Breast epithelium (tissue), 4 donors: ENCODE measurements at regions of chr11 and their contacts with region 1.

Region 1: DNA sequence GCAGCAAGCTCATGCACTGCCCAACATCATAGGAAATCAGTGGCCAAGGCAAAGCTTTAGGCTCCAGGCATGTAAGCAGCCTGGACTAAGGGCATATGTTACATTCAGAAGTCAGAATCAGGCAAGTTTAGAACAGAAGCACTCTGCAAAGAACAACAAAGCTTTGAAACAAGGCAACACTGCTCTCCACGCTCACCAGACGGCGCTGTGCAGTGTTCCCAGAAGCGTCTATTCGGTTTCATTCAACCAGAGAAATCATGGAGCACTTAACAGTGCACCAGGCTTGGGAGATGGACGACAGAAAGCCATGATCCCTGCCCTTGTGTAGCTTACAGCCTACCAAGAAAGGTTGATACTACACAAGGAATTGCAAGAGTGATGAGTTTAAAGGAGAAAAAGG is 555.8 kb downstream of the BUD13 start:
- DNase-seq: no peak
- H3K4me3 ChIP-seq: no peak overlapping the region
- H3K27ac ChIP-seq: no peak overlapping the region
- H3K4me1 ChIP-seq: peaks cover 3 to 8% of the 10 kb centered on the region in 2 donors
- H3K27me3 ChIP-seq: no peaks in the 10 kb centered on the region
- CTCF ChIP-seq: peak in 2 of 3 donors; percentile 27 to 41
- POLR2A ChIP-seq: no peak

Region 2: GRCh38 chr11:116257883-116258282 is 40.9 kb after region 1 on chr11:
- intact Hi-C with region 1: loop called (anchors 2 kb)
- DNase-seq: no peak
- H3K4me3 ChIP-seq: no peak overlapping the region
- H3K27ac ChIP-seq: no peak overlapping the region
- H3K4me1 ChIP-seq: no peaks in the 10 kb centered on the region
- H3K27me3 ChIP-seq: peaks cover 0 to 8% of the 10 kb centered on the region in 2 donors
- CTCF ChIP-seq: no peak
- POLR2A ChIP-seq: no peak

Region 3: GRCh38 chr11:117410861-117411710 is 1194.1 kb after region 1 on chr11:
- intact Hi-C with region 1: no loop called
- DNase-seq: no peak
- H3K4me3 ChIP-seq: no peak overlapping the region
- H3K27ac ChIP-seq: no peak overlapping the region
- H3K4me1 ChIP-seq: no peaks in the 10 kb centered on the region
- H3K27me3 ChIP-seq: no peaks in the 10 kb centered on the region
- CTCF ChIP-seq: no peak
- POLR2A ChIP-seq: no peak